ENCODE measurements at regions of chr1 and their contacts with region 1.

Region 1: DNA sequence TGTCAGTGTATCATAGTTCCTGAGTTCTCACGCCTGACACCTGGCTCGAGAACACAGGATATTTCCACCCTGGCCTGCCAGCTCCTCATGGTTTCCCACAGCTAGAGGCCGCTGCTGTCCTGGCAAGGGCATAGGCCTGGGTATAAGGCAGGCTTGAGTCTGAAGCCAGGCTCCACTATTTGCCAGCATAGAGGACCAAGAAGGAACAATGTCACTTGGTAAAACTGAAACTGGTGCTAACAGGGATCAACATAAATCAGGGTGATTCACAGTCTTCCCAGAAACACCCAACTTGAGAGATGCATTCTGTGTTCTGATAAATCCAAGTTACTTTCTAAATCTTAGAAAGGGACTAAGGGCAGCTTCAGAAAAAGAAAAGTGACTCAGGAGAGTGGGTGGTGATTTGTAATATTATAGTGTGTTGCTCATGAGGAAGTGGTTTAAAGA is 6.9 kb upstream of the S100A2 start:
- DNase-seq: no peak

Region 2: DNA sequence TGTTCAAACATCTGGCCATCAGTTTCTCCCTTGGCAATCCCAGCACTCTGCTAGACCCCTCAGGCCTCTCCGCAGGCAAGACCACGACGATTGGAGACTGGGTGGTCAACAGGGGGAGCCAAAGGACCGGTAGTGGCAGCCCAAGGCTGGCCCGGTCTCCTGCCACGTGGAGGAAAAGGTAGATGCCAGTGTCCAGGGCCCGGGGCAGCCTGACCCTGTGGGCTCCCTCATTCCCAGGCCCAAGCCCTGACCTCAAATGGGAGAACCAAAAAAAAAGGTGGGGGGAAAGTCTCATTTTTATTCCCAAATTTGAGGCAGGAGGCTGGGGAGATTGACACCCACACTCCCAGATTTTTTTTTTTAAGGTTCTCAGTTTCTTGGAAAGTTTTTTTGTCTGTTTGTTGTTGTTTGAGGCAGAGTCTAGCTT is 61.6 kb before region 1 on chr1:
- CTCF ChIA-PET with region 1: interaction called, 20 read pairs
- POLR2A ChIA-PET with region 1: interaction called, 5 read pairs
- DNase-seq: peak; percentile 94

Region 3: DNA sequence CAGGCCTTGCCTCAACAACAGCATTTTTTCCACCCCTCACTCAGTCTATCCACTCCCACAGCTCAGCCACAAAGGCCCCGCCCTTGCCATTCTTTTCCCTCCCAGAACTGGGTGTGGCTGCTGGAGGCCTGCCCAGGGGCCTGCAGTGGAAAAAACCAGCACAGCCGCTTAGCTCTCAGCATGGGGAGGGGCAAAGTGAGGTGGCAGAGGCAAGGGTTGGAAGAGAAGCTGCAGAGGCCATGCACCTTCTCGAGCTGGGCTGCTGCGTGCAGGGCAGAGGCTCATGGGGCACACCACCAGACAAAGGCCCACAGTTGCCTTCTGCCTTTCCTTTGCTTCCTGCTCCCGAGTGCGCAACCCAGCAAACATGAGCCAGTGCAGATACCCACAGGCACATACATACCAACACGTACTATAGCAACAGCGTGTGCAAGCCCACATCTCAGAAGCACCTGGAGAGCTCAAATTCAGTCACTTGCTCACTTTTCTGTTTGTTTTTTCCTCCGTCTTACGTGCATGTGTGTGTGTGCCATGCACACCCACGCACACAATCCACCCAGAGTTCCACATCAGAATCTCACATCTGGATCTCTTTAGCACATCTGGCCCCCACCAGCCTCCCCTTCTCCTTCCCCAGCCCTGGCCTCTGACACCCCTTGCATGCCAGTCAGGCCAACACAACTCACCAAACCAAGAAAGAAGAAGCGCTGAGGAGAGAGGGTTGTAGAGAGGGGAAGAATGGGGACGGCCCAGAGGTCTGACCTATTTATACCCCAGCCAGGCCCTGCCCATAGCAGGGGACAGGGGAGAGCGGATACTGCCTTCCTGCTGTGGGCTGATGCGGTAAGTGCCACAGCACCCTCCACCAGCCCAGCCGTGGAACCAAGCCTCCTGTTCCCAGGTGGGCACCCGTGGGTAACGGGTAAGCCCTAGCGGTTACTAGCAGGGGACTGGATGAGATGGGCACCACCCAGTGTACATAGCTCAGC is 27.2 kb before region 1 on chr1 and contains the start of gene S100A4:
- CTCF ChIA-PET with region 1: interaction called, 11 read pairs
- POLR2A ChIA-PET with region 1: interaction called, 5 read pairs
- DNase-seq: peak; percentile 89

Region 4: DNA sequence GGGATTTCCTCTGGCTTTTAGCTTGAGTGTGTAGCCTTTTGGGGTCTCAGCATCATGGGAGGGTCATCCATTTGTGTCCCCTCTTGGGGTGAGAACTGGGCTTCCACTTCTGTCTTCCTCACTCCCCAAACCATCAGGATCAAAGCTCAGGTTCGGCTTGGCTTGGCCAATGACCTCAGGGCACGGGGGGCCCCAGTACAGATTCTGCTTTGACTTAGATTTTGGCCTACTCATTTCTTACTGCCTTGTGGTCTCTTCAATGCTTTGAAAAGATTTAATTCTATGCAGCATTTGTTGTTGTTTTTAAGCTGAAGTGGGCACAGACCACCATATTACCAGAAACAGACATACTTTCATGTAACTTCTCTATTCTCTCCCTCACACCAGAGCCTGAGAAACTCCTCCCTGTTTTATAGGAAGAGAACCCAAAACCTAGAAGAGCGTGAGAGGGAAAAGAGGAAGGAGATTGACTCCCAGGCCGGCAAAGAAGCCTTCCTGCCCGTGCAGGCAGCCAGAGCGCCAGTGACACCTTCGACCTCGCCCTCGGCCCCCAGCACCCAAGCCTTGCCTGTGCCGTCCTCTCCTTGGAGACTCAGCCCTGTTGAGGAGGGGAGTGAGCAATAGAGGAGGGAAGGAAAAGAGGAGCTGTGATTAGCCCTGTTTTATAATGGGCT is 21.6 kb before region 1 on chr1:
- CTCF ChIA-PET with region 1: interaction called, 11 read pairs
- POLR2A ChIA-PET with region 1: no interaction called
- DNase-seq: no peak

Region 5: GRCh38 chr1:153608742-153609584 is 36.4 kb after region 1 on chr1:
- CTCF ChIA-PET with region 1: no interaction called
- POLR2A ChIA-PET with region 1: no interaction called
- DNase-seq: no peak

Region 6: GRCh38 chr1:153727463-153728304 is 155.1 kb after region 1 on chr1 and contains the start of gene INTS3:
- CTCF ChIA-PET with region 1: no interaction called
- POLR2A ChIA-PET with region 1: no interaction called
- DNase-seq: peak; percentile 100